ENCODE measurements at regions of chr1 and their contacts with region 1.

Region 1: DNA sequence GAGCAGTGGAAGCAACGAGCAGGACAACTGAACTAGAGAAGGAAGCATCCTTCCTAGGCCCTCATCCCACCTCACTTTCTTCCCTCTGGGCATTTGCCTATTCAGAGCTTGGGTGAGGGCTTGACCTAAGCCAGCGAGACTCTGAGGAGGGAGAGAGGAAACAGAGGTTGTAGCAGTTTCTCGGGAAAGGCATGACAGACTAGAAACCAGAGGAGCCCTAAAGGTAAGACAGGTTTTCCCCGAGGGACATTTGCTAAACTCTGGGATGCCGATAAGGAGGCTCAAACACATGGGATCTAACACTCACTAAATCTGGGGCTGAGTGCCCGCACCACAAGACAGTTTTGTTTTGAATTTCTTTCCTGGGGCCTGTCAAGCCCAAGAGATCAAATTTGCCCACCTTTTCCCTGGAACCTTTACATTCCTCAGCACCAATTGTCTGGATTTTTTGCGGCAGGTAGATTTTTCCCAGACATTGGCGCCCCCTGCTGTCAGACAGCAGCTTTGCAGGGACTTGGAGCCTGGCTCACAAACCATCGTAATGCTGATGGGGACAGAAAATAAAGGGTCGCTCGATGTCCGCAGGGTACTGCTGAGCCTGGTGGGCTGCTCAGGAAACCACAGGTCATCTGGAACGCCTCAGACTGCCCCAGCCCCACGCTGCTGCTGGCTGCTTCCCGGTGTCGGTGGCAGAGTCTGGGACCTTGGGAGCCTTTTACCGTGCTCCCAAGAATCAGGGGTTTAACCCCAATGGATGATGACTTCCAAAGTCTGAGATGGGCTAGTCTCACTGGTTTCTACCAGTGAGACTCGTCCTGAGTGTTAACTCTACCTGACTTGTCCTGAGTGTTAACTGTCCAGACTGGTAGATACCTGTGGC is 23.4 kb upstream of the TSPAN2 start:
- DNase-seq: no peak
- H3K4me3 ChIP-seq: no peak overlapping the region
- H3K27ac ChIP-seq: no peak overlapping the region
- H3K4me1 ChIP-seq: peaks cover 0 to 16% (median 5%) of the 10 kb centered on the region in 4 donors
- H3K27me3 ChIP-seq: no peaks in the 10 kb centered on the region
- CTCF ChIP-seq: peak; percentile 94 to 97 (median 97)
- EP300 ChIP-seq: no peak
- POLR2A ChIP-seq: no peak

Region 2: DNA sequence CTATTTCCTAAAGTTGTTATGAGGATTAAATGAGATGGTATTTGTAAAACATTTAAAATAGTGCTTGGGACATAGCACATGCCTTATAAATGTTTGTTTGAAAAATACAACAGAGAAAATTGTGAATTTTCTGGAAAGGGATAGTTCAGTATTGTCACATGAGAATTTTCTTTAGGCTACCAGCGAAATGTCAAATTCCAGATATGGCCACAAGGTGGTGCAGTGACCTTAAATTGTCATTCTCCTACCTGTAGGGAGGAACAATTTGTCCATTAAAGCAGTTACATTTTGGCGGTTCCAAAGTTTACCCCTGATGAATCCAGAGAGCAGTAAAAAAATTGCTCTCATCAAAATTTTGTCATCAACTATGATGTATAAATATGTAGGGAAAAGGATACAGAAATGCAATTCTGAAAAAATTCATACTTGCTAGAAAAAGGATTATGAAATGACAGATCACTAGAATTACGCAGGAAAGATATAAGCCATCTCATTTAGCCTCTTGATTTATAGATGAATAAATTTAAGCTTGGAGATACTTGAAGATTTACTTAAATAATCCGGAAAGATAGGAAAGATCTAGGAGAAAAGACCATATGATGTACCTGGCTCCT is 133.4 kb before region 1 on chr1:
- intact Hi-C with region 1: loop called (anchors 1 kb)
- DNase-seq: no peak
- H3K4me3 ChIP-seq: no peak overlapping the region
- H3K27ac ChIP-seq: no peak overlapping the region
- H3K4me1 ChIP-seq: no peaks in the 10 kb centered on the region
- H3K27me3 ChIP-seq: no peaks in the 10 kb centered on the region
- CTCF ChIP-seq: peak; percentile 86 to 87 (median 87)
- EP300 ChIP-seq: no peak
- POLR2A ChIP-seq: no peak

Measured in esophagus muscularis mucosa (tissue), 4 donors.